ENCODE measurements at regions of chr6 and their contacts with region 1.

Region 1: GRCh38 chr6:116060572-116061283 is at the start of gene FRK:
- DNase-seq: peak; percentile 46
- H3K27ac ChIP-seq: peak within 1 kb of the TSS; percentile 32; the same call in 1 of the 2 replicates
- CTCF ChIP-seq: no peak; the same call in 1 of the 2 replicates

Region 2: DNA sequence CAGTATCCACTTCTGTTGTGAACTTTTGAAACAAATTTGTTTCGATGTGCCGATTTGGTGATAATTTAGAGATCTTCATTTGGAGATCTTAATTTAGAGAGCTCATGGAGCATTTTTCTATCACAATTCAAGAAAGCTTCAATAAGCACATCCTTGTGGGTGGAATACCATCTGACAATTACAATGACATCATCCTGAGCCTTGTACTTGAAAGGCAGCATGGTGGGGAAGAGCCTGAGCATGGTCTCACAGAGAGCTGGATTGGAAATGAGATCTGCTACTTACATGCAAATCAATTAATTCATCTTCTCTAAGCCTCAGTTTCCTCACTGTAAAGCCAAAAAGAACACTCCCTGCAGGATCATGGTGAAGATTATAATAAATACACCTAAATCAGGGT is 75.9 kb before region 1 on chr6:
- CTCF ChIA-PET with region 1: interaction called, 11 read pairs
- POLR2A ChIA-PET with region 1: no interaction called
- DNase-seq: no peak
- H3K27ac ChIP-seq: no peak overlapping the region
- CTCF ChIP-seq: no peak

Region 3: GRCh38 chr6:116253505-116254296 is 193.0 kb after region 1 on chr6 and contains the start of gene TSPYL4:
- CTCF ChIA-PET with region 1: no interaction called
- POLR2A ChIA-PET with region 1: no interaction called
- DNase-seq: peak; percentile 92
- H3K27ac ChIP-seq: peak within 1 kb of the TSS; percentile 84
- CTCF ChIP-seq: no peak

Measured in RWPE1 (cell line).